ENCODE measurements at regions of chr12 and their contacts with region 1.

Region 1: GRCh38 chr12:75480469-75480949 is at the start of gene GLIPR1:
- DNase-seq: peak; percentile 92
- H3K4me3 Mint-ChIP-seq: peak within 1 kb of the TSS; percentile 77
- H3K27ac Mint-ChIP-seq: peak within 1 kb of the TSS; percentile 91
- H3K4me1 Mint-ChIP-seq: peaks cover 67% of the 10 kb centered on the region
- H3K27me3 Mint-ChIP-seq: peaks cover 2% of the 10 kb centered on the region
- total RNA-seq, gene GLIPR1: 4.3 and 5.3 TPM in 2 replicates

Region 2: DNA sequence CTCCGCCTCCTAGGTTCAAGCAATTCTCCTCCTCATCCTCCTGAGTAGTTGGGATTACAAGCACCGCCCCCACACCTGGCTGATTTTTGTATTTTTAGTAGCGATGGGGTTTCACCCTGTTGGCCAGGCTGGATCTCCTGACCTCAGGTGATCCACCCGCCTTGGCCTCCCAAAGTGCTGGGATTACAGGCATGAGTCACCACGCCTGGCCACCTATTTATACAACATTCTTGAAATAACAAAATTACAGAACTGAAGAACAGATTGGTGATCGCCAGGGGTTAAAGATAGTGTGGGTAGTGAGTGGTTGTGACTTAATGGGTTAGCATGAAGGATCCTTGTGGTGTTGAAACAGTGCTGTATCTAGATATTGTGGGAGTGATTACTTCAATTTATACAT is 138.7 kb before region 1 on chr12:
- intact Hi-C with region 1: loop called (anchors 1 kb)
- DNase-seq: no peak
- H3K4me3 Mint-ChIP-seq: no peak overlapping the region
- H3K27ac Mint-ChIP-seq: no peak overlapping the region
- H3K4me1 Mint-ChIP-seq: peaks cover 11% of the 10 kb centered on the region
- H3K27me3 Mint-ChIP-seq: peaks cover 33% of the 10 kb centered on the region

Region 3: DNA sequence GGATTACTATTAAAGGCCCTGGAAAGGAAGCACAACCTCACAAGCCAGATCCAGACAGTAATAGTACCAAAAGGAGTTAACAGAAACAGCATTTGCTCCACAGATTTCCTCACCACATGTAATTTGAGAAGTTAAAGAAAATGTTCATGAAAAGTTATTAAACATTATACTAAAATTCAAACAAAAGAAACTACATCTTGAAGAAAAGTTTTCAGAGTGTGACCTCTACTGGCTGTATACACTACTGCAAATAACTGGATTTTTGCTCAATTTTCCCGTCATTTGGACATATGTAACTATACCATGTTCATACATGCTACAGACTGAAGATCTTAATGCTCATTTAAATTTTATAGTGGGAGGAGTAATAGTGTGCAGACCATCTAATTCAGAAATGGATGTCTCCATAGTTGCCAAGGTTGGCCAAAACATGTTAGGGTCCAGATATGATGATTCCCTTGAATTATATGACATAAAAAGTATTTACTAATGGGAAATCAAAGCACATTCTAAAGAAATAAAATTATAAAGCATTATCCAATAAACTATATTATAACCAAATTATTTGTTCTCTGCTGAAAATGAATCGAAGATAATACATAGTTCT is 25.3 kb after region 1 on chr12:
- intact Hi-C with region 1: loop called (anchors 1 kb)
- DNase-seq: no peak
- H3K4me3 Mint-ChIP-seq: no peak overlapping the region
- H3K27ac Mint-ChIP-seq: no peak overlapping the region
- H3K4me1 Mint-ChIP-seq: peaks cover 28% of the 10 kb centered on the region
- H3K27me3 Mint-ChIP-seq: no peaks in the 10 kb centered on the region

Region 4: GRCh38 chr12:75526655-75527511 is 46.4 kb after region 1 on chr12:
- intact Hi-C with region 1: no loop called
- DNase-seq: peak; percentile 74
- H3K4me3 Mint-ChIP-seq: no peak overlapping the region
- H3K27ac Mint-ChIP-seq: peak overlapping the region; percentile 34
- H3K4me1 Mint-ChIP-seq: peaks cover 7% of the 10 kb centered on the region
- H3K27me3 Mint-ChIP-seq: peaks cover 34% of the 10 kb centered on the region

Region 5: GRCh38 chr12:75913502-75914351 is 433.2 kb after region 1 on chr12:
- intact Hi-C with region 1: loop called (anchors 1 kb)
- DNase-seq: peak; percentile 63
- H3K4me3 Mint-ChIP-seq: no peak overlapping the region
- H3K27ac Mint-ChIP-seq: peak overlapping the region; percentile 65
- H3K4me1 Mint-ChIP-seq: peaks cover 25% of the 10 kb centered on the region
- H3K27me3 Mint-ChIP-seq: peaks cover 3% of the 10 kb centered on the region

Region 6: DNA sequence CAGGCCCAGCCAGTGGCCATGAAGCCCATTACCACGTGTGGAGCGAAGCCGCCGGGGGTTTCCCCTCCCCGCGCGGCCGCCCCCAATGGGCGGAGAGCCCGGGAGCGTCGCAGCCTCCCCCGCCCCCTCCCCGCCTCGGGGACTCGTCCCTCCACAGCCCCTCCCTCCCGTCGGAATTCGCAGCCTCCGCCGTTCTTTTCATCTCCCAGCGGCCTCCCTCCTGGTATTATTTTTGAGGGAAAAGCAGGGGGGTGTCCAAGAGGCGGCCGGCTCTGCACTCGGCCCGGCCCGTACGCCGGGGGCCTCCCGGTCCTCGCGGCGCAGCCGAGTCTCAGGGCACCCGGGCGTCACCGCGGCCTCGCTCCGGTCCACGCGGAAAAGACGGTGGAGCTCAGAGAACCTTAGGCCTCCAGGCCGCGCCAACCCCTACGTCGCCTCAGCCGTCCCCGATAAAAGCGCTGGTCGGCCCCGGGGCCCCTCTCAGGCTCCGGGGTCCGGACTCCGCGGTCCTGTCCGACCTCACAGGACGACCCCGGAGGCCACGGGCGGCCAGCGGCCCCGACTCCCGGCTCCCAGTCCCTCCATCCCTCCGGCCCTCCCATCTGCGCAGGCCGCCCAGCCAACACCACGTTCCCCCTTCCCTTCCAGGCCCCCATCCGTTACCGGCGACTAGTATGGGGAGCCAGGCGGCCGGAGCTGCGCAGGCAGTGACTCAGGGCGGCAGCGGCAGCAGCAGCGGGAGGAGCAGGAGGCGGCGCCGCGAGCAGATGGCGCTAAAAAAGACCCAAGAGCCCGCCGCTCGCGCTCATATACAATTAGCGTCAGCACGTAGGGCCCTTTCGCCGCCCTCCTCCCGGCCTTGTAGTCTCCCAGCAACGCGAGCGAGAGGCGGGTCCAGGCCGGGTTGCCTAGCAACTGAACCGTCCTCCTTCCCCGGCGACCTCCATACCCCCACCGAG is 603.7 kb after region 1 on chr12 and contains the start of gene NAP1L1:
- intact Hi-C with region 1: loop called (anchors 1 kb)
- DNase-seq: peak; percentile 99
- H3K4me3 Mint-ChIP-seq: peak within 1 kb of the TSS; percentile 100
- H3K27ac Mint-ChIP-seq: peak within 1 kb of the TSS; percentile 100
- H3K4me1 Mint-ChIP-seq: peaks cover 42% of the 10 kb centered on the region
- H3K27me3 Mint-ChIP-seq: no peaks in the 10 kb centered on the region
- total RNA-seq, gene NAP1L1: 652 and 689 TPM in 2 replicates

Region 7: DNA sequence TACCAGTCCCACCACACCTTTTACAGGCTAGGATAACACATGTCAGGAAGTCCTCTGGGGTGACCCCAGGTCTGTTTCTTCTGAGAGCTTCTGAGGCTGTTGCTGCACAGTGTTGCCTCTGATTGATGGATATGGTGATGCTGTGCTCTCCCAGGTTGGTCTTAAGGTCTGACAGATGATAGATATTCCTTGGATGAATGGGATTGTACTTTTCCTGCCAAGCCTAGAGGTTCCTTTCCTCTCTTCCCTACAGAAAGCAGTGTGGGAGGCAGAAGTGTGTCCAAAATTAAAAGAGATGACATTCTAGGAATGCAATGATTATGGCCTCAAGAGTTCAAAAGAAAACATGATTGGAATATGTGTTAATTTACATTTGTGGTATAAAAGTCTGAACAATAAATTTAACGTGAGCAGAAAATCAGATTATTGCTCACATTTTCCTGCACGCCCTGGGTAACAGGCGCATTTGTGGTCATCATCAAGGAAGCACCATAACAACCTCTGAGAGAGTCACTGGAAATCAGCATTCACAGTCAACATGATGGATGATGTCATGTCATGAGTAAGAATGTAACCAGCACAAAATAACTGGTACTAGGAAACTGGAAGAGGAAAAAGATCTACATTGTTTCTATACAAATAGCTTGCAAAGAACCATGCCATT is 794.0 kb after region 1 on chr12:
- intact Hi-C with region 1: loop called (anchors 2 kb)
- DNase-seq: no peak
- H3K4me3 Mint-ChIP-seq: no peak overlapping the region
- H3K27ac Mint-ChIP-seq: peak overlapping the region; percentile 75
- H3K4me1 Mint-ChIP-seq: peaks cover 8% of the 10 kb centered on the region
- H3K27me3 Mint-ChIP-seq: peaks cover 4% of the 10 kb centered on the region